GM13976 (cell line): ENCODE measurements at regions of chr3 and their contacts with region 1.

Region 1: DNA sequence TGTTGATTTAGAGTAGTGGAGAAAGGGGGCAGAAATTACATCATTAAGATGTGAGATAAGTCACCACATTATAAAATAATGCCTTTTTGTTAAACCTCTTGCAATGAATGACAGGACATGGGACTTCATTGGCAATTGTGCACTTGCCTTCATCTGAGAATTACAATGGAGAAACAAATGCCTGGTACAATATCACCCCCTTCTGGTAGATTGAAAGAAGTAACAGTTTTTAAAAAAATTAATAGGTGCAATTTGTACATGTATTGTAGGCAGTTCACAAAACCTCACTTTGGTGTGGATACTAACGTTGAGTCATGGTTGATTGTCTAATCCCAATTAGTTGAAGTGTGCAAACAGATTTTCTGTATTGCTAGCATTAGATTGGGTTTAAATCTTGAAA is 4.6 kb upstream of the P2RY14 start:
- DNase-seq: peak; percentile 60
- CTCF ChIP-seq: peak; percentile 31

Region 2: GRCh38 chr3:151227807-151228665 is 54.9 kb before region 1 on chr3:
- in situ Hi-C with region 1: loop called (anchors 5 kb)
- DNase-seq: peak; percentile 71
- CTCF ChIP-seq: peak; percentile 77

Region 3: DNA sequence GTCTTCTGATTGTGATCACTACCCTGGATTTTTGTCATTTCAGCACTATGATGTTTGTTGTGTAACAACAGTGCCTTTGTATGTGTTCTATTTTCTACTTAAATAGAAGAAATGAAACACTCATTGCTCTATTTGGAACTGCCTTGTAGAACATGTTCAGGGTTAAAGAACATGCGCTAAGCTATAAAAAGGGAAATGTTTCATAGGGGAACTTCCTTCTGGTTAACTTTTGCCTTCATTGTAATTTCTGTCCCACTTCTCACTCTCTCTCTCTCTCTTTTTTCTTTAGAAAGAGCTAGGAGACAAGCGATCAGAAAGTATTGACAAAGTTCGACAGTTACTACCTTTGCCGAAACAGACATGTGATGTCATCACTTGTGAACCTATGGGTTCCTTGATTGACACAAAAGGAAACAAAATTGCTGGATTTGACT is 101.8 kb after region 1 on chr3 and contains the start of gene P2RY12:
- in situ Hi-C with region 1: no loop called
- DNase-seq: peak; percentile 13
- CTCF ChIP-seq: no peak